ENCODE measurements at regions of chr10 and their contacts with region 1.

Region 1: DNA sequence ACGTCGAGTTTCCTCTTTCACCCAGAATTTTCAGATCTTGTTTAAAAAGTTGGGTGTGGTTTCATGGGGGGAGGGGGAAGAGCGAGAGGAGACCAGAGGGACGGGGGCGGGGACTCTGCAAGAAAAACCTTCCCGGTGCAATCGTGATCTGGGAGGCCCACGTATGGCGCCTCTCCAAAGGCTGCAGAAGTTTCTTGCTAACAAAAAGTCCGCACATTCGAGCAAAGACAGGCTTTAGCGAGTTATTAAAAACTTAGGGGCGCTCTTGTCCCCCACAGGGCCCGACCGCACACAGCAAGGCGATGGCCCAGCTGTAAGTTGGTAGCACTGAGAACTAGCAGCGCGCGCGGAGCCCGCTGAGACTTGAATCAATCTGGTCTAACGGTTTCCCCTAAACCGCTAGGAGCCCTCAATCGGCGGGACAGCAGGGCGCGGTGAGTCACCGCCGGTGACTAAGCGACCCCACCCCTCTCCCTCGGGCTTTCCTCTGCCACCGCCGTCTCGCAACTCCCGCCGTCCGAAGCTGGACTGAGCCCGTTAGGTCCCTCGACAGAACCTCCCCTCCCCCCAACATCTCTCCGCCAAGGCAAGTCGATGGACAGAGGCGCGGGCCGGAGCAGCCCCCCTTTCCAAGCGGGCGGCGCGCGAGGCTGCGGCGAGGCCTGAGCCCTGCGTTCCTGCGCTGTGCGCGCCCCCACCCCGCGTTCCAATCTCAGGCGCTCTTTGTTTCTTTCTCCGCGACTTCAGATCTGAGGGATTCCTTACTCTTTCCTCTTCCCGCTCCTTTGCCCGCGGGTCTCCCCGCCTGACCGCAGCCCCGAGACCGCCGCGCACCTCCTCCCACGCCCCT is at the start of gene VIM:
- DNase-seq: peak; percentile 92
- H3K4me3 Mint-ChIP-seq: peak within 1 kb of the TSS; percentile 89
- H3K27ac Mint-ChIP-seq: peak within 1 kb of the TSS; percentile 95
- H3K4me1 Mint-ChIP-seq: peaks cover 55% of the 10 kb centered on the region
- H3K27me3 Mint-ChIP-seq: no peaks in the 10 kb centered on the region
- total RNA-seq, gene VIM: 2,572 to 2,607 TPM

Region 2: GRCh38 chr10:16817125-16818019 is 410.9 kb before region 1 on chr10 and contains the start of gene RSU1:
- CTCF ChIA-PET with region 1: interaction called, 9 read pairs
- POLR2A ChIA-PET with region 1: interaction called, 58 read pairs
- DNase-seq: peak; percentile 100
- H3K4me3 Mint-ChIP-seq: peak within 1 kb of the TSS; percentile 85
- H3K27ac Mint-ChIP-seq: peak within 1 kb of the TSS; percentile 92
- H3K4me1 Mint-ChIP-seq: peaks cover 40% of the 10 kb centered on the region
- H3K27me3 Mint-ChIP-seq: peaks cover 4% of the 10 kb centered on the region
- total RNA-seq, gene RSU1: 74.3 to 74.9 TPM

Region 3: GRCh38 chr10:17144757-17145156 is 83.6 kb before region 1 on chr10:
- CTCF ChIA-PET with region 1: interaction called, 3 read pairs
- POLR2A ChIA-PET with region 1: interaction called, 34 read pairs
- DNase-seq: peak; percentile 51
- H3K4me3 Mint-ChIP-seq: no peak overlapping the region
- H3K27ac Mint-ChIP-seq: no peak overlapping the region
- H3K4me1 Mint-ChIP-seq: peaks cover 16% of the 10 kb centered on the region
- H3K27me3 Mint-ChIP-seq: no peaks in the 10 kb centered on the region

Region 4: DNA sequence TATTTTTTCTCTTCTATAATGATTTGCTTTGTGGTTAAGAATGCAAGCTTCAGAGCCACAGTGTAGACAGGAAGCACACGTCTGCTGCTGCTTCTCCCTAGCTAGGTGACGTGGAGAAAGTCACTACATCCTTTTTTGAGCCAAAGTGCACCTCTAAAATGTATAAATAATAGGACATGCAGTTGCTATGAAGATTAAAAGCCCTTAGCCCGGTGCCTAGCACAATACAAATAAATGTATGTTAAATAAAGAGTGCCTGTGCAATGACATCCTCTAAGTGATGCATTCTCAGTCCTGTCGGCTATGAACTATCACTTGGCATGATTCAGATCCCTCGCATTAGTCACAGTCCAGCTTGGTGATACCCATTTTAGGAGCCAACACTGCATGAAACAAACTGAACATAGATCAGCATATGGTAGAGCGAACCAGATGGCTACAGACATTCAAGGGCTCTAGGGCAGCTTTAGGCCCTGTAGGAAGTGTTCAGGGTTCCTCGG is 22.1 kb before region 1 on chr10:
- CTCF ChIA-PET with region 1: interaction called, 28 read pairs
- POLR2A ChIA-PET with region 1: interaction called, 215 read pairs
- DNase-seq: peak; percentile 44
- H3K4me3 Mint-ChIP-seq: peak overlapping the region; percentile 31
- H3K27ac Mint-ChIP-seq: peak overlapping the region; percentile 77
- H3K4me1 Mint-ChIP-seq: peaks cover 57% of the 10 kb centered on the region
- H3K27me3 Mint-ChIP-seq: no peaks in the 10 kb centered on the region

Region 5: DNA sequence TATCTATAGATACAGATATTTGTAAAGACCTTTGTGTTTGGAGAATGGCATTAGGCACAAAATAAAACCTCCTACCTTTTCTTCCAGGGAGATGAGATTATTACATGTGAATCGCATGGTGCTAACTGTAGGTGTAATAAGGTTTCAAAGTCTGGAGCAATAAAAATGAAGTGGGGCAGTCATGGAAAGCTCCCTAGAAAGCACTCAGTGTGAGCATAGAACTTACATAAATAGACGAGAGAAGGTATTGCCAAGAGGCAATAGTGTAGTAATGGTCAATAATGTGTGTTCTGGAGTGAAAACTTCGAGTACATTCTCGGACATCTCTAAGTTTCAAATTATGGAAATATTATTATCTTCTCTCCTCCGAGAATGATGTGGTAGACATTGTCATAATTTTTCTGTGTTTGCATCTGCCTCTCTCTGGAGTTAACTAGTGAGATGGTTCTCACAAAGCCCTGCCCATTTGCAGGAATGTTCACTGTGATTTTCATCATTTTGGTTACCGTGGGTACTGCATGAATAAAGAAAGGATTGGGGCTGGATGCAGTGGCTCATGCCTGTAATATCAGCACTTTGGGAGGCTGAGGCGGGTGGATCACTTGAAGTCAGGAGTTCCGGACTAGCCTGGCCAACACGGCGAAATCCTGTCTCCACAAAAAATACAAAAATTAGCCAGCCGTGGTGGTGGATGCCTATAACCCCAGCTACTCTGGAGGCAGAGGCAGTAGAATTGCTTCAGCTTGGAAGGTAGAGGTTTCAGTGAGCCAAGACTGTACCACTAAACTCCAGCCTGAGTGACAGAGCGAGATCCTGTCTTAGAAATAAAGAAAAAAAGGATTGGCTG is 10.4 kb after region 1 on chr10:
- CTCF ChIA-PET with region 1: no interaction called
- POLR2A ChIA-PET with region 1: interaction called, 16 read pairs
- DNase-seq: no peak
- H3K4me3 Mint-ChIP-seq: no peak overlapping the region
- H3K27ac Mint-ChIP-seq: no peak overlapping the region
- H3K4me1 Mint-ChIP-seq: peaks cover 31% of the 10 kb centered on the region
- H3K27me3 Mint-ChIP-seq: no peaks in the 10 kb centered on the region

Region 6: GRCh38 chr10:17504547-17505245 is 276.4 kb after region 1 on chr10:
- CTCF ChIA-PET with region 1: no interaction called
- POLR2A ChIA-PET with region 1: interaction called, 16 read pairs
- DNase-seq: no peak
- H3K4me3 Mint-ChIP-seq: peak overlapping the region; percentile 57
- H3K27ac Mint-ChIP-seq: peak overlapping the region; percentile 91
- H3K4me1 Mint-ChIP-seq: peaks cover 58% of the 10 kb centered on the region
- H3K27me3 Mint-ChIP-seq: no peaks in the 10 kb centered on the region

Measured in activated CD4-positive, alpha-beta memory T cell treated with anti-CD3 and anti-CD28 coated beads, Interleukin-2, amount 10 ng/mL, durations not matched to agents 7 days and 5 days (primary cell).